Activated B cell treated with CpG ODN at 0.5 μM for 24 hours (primary cell): ENCODE measurements at regions of chr16 and their contacts with region 1.

Region 1: GRCh38 chr16:28823872-28824716 is 1.3 kb downstream of the ATXN2L start:
- DNase-seq: peak; percentile 92
- ATAC-seq: peak; percentile 77
- H3K4me3 Mint-ChIP-seq: peak overlapping the region; percentile 98
- H3K27ac Mint-ChIP-seq: peak overlapping the region; percentile 99
- H3K4me1 Mint-ChIP-seq: peaks cover 43% of the 10 kb centered on the region
- H3K27me3 Mint-ChIP-seq: no peaks in the 10 kb centered on the region
- CTCF ChIP-seq: no peak

Region 2: GRCh38 chr16:28473714-28474265 is 350.3 kb before region 1 on chr16:
- CTCF ChIA-PET with region 1: no interaction called
- POLR2A ChIA-PET with region 1: no interaction called
- intact Hi-C with region 1: no loop called
- DNase-seq: no peak
- ATAC-seq: peak; percentile 56
- H3K4me3 Mint-ChIP-seq: no peak overlapping the region
- H3K27ac Mint-ChIP-seq: no peak overlapping the region
- H3K4me1 Mint-ChIP-seq: peaks cover 6% of the 10 kb centered on the region
- H3K27me3 Mint-ChIP-seq: no peaks in the 10 kb centered on the region
- CTCF ChIP-seq: no peak

Region 3: GRCh38 chr16:28553776-28554633 is 270.1 kb before region 1 on chr16 and contains the start of gene SGF29:
- CTCF ChIA-PET with region 1: no interaction called
- POLR2A ChIA-PET with region 1: interaction called, 9 read pairs
- intact Hi-C with region 1: loop called (anchors 5 kb)
- DNase-seq: peak; percentile 86
- ATAC-seq: peak; percentile 90
- H3K4me3 Mint-ChIP-seq: peak within 1 kb of the TSS; percentile 91
- H3K27ac Mint-ChIP-seq: peak within 1 kb of the TSS; percentile 97
- H3K4me1 Mint-ChIP-seq: peaks cover 27% of the 10 kb centered on the region
- H3K27me3 Mint-ChIP-seq: peaks cover 4% of the 10 kb centered on the region
- CTCF ChIP-seq: no peak
- total RNA-seq, gene SGF29: 34.1 and 40.3 TPM in 2 replicates

Region 4: GRCh38 chr16:28572696-28573510 is 251.2 kb before region 1 on chr16:
- CTCF ChIA-PET with region 1: no interaction called
- POLR2A ChIA-PET with region 1: no interaction called
- intact Hi-C with region 1: no loop called
- DNase-seq: no peak
- ATAC-seq: no peak
- H3K4me3 Mint-ChIP-seq: no peak overlapping the region
- H3K27ac Mint-ChIP-seq: no peak overlapping the region
- H3K4me1 Mint-ChIP-seq: peaks cover 4% of the 10 kb centered on the region
- H3K27me3 Mint-ChIP-seq: no peaks in the 10 kb centered on the region
- CTCF ChIP-seq: no peak

Region 5: DNA sequence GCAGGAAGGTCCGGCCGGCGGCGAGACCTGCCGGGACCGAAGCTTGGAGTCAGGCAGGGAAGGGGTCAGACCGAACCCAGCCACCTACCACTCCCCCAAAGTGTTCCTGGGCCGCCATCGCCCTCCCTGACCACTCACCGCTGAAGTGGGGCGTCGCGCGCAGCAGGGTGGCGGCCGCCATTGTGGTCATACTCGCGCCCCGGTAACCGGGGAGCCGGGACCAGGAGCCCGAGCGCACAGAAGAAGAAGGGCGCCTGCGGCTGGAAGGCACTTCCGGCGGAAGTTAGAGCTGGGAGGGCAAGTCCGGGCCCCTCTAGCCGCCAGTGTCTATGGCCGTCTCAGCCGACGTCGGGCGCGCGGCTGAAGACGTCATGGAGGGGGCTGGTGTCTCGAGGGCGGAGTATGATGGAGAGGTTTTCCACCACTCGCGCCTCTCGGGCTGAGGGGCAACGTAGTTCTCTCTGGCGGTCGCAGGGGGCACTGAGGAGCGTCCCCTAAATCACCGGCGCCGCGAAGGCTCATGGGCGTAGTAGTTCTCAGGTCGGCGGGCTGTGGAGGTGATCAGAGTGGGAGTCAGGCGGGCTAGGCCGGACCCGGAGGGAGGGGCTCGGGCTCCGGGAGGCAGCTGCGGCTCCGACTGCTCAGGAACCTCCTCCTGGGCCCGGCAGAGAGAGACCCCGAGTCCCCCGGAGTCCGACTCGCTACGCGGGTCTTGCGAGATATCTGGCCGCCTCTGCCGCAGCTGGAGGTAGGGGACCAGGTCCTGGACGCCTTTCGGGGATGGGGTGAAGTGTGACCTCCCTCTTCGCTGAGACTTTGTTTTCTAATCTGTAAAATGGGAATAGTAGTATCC is 22.2 kb after region 1 on chr16 and contains the start of gene TUFM:
- CTCF ChIA-PET with region 1: interaction called, 4 read pairs
- POLR2A ChIA-PET with region 1: interaction called, 74 read pairs
- intact Hi-C with region 1: loop called (anchors 1 kb)
- DNase-seq: peak; percentile 96
- ATAC-seq: peak; percentile 97
- H3K4me3 Mint-ChIP-seq: peak within 1 kb of the TSS; percentile 95
- H3K27ac Mint-ChIP-seq: peak within 1 kb of the TSS; percentile 90
- H3K4me1 Mint-ChIP-seq: peaks cover 28% of the 10 kb centered on the region
- H3K27me3 Mint-ChIP-seq: no peaks in the 10 kb centered on the region
- CTCF ChIP-seq: no peak
- total RNA-seq, gene TUFM: 189 and 206 TPM in 2 replicates

Region 6: GRCh38 chr16:28930652-28931051 is 106.6 kb after region 1 on chr16:
- CTCF ChIA-PET with region 1: no interaction called
- POLR2A ChIA-PET with region 1: interaction called, 49 read pairs
- intact Hi-C with region 1: no loop called
- DNase-seq: peak; percentile 60
- ATAC-seq: peak; percentile 76
- H3K4me3 Mint-ChIP-seq: peak overlapping the region; percentile 99
- H3K27ac Mint-ChIP-seq: peak overlapping the region; percentile 98
- H3K4me1 Mint-ChIP-seq: peaks cover 75% of the 10 kb centered on the region
- H3K27me3 Mint-ChIP-seq: no peaks in the 10 kb centered on the region
- CTCF ChIP-seq: no peak

Region 7: DNA sequence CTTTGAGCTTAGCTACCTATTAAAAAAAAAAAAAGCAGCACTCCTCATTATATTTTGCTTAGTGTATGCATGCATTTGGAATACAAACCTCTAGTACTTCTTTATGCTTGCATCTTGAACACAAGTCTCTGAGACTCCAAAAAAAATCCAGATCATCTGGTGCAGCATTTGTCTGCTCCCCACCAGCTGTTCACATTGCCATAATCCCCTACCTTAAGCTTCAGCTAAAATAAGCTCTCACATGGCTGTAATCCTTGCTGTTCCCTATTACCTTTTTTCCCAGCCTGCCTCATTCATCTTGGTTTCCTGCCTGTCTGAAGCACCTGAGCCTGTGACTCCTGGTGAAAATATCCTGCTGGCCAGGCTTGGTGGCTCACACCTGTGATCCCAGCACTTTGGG is 119.2 kb after region 1 on chr16:
- CTCF ChIA-PET with region 1: no interaction called
- POLR2A ChIA-PET with region 1: interaction called, 16 read pairs
- intact Hi-C with region 1: loop called (anchors 1 kb)
- DNase-seq: no peak
- ATAC-seq: no peak
- H3K4me3 Mint-ChIP-seq: no peak overlapping the region
- H3K27ac Mint-ChIP-seq: peak overlapping the region; percentile 8
- H3K4me1 Mint-ChIP-seq: peaks cover 11% of the 10 kb centered on the region
- H3K27me3 Mint-ChIP-seq: no peaks in the 10 kb centered on the region
- CTCF ChIP-seq: no peak

Region 8: DNA sequence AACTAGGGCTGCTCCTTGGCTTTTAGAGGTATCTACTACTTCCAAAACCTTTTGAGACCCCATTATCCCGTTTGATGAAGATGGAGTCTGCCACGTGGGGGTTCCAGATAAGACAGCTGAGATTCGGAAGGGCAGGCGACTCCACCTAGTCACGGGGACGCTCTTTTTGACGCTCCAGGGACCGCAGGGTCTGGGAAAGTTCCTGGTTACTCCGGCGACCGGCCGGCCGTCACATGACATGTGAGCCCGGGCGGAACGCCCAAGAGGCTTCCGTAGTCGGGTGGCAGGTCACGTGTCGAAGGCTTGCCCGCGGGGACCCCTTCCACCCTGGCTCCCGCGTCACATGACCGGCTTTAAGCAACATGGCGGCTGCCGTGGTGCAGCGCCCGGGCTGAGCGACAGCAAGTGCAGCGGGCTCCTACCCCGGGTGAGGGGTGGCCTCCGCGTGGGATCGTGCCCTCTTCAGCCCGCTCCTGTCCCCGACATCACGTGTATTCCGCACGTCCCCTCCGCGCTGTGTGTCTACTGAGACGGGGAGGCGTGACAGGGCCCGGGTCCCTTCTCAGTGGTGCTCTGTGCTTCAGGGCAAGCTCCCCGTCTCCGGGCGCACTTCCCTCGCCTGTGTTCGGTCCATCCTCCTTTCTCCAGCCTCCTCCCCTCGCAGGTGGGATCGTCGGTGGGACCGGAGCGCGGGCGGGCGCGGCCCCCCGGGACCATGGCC is 150.5 kb after region 1 on chr16 and contains the start of gene SPNS1:
- CTCF ChIA-PET with region 1: no interaction called
- POLR2A ChIA-PET with region 1: interaction called, 19 read pairs
- intact Hi-C with region 1: loop called (anchors 1 kb)
- DNase-seq: peak; percentile 91
- ATAC-seq: peak; percentile 91
- H3K4me3 Mint-ChIP-seq: peak within 1 kb of the TSS; percentile 94
- H3K27ac Mint-ChIP-seq: peak within 1 kb of the TSS; percentile 94
- H3K4me1 Mint-ChIP-seq: peaks cover 31% of the 10 kb centered on the region
- H3K27me3 Mint-ChIP-seq: no peaks in the 10 kb centered on the region
- CTCF ChIP-seq: no peak
- total RNA-seq, gene SPNS1: 26.6 and 29.2 TPM in 2 replicates

Region 9: GRCh38 chr16:29029168-29029994 is 205.3 kb after region 1 on chr16:
- CTCF ChIA-PET with region 1: no interaction called
- POLR2A ChIA-PET with region 1: no interaction called
- intact Hi-C with region 1: no loop called
- DNase-seq: no peak
- ATAC-seq: peak; percentile 83
- H3K4me3 Mint-ChIP-seq: no peak overlapping the region
- H3K27ac Mint-ChIP-seq: no peak overlapping the region
- H3K4me1 Mint-ChIP-seq: peaks cover 4% of the 10 kb centered on the region
- H3K27me3 Mint-ChIP-seq: peaks cover 11% of the 10 kb centered on the region
- CTCF ChIP-seq: no peak

Region 10: GRCh38 chr16:29139261-29139811 is 315.2 kb after region 1 on chr16:
- CTCF ChIA-PET with region 1: no interaction called
- POLR2A ChIA-PET with region 1: no interaction called
- intact Hi-C with region 1: no loop called
- DNase-seq: no peak
- ATAC-seq: no peak
- H3K4me3 Mint-ChIP-seq: no peak overlapping the region
- H3K27ac Mint-ChIP-seq: no peak overlapping the region
- H3K4me1 Mint-ChIP-seq: no peaks in the 10 kb centered on the region
- H3K27me3 Mint-ChIP-seq: no peaks in the 10 kb centered on the region
- CTCF ChIP-seq: no peak